Common myeloid progenitor, CD34-positive (primary cell): ENCODE measurements at regions of chr2 and their contacts with region 1.

Region 1: GRCh38 chr2:240566203-240567136 is 1.8 kb upstream of the RNPEPL1 start:
- DNase-seq: peak; percentile 84 to 90 (median 89)
- H3K4me3 ChIP-seq: peak overlapping the region; percentile 13 to 86 (median 71)
- H3K27ac ChIP-seq: peak overlapping the region; percentile 76 to 92
- H3K4me1 ChIP-seq: peaks cover 13 to 73% (median 67%) of the 10 kb centered on the region in 4 experiments
- H3K27me3 ChIP-seq: no peaks in the 10 kb centered on the region

Region 2: DNA sequence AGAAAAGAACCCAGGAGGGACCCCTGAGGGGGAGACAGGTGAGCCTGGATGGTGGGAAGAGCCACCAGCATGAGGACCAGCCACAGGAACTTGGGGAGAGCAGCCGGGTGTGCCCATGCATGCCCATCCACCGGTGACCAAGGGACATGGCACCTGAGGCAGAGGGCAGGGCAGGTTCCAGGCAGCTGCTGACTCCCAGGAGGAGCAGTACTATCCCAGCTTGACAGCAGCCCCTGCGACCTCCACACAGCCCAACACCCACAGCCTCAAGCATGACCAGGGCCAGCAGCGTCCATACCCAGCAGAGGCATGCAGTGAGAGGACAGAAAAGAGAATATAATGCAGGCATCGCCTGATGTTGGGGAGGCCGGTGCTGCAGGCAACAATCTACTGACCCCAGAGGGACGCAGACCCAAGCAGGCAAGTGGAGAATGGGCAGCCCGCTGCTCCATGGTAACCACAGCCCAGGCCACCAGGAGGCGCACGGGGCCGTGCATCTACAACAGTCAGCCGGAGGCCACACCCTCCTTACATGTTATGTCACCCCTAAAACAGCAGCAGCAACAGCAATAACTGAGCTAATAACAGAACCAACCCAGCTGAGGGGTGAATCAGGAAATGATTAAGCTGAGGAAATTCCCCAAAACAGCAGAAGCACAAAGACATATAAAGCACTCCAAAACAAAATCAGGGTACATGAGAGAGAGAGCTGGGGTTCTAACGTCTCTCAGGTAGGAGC is 52.8 kb before region 1 on chr2:
- CTCF ChIA-PET with region 1: interaction called, 11 read pairs
- POLR2A ChIA-PET with region 1: interaction called, 4 read pairs
- DNase-seq: peak; percentile 77 to 91 (median 90)
- H3K4me3 ChIP-seq: no peak overlapping the region
- H3K27ac ChIP-seq: no peak overlapping the region
- H3K4me1 ChIP-seq: peaks cover 0 to 4% (median 4%) of the 10 kb centered on the region in 4 experiments
- H3K27me3 ChIP-seq: peaks cover 0 to under 1% (median 0%) of the 10 kb centered on the region in 5 experiments

Region 3: GRCh38 chr2:240579771-240580614 is 13.5 kb after region 1 on chr2:
- CTCF ChIA-PET with region 1: interaction called, 13 read pairs
- POLR2A ChIA-PET with region 1: interaction called, 39 read pairs
- DNase-seq: peak in 1 of 3 donors; percentile 23
- H3K4me3 ChIP-seq: no peak overlapping the region
- H3K27ac ChIP-seq: no peak overlapping the region
- H3K4me1 ChIP-seq: peaks cover 0 to 13% (median 9%) of the 10 kb centered on the region in 4 experiments
- H3K27me3 ChIP-seq: no peaks in the 10 kb centered on the region

Region 4: DNA sequence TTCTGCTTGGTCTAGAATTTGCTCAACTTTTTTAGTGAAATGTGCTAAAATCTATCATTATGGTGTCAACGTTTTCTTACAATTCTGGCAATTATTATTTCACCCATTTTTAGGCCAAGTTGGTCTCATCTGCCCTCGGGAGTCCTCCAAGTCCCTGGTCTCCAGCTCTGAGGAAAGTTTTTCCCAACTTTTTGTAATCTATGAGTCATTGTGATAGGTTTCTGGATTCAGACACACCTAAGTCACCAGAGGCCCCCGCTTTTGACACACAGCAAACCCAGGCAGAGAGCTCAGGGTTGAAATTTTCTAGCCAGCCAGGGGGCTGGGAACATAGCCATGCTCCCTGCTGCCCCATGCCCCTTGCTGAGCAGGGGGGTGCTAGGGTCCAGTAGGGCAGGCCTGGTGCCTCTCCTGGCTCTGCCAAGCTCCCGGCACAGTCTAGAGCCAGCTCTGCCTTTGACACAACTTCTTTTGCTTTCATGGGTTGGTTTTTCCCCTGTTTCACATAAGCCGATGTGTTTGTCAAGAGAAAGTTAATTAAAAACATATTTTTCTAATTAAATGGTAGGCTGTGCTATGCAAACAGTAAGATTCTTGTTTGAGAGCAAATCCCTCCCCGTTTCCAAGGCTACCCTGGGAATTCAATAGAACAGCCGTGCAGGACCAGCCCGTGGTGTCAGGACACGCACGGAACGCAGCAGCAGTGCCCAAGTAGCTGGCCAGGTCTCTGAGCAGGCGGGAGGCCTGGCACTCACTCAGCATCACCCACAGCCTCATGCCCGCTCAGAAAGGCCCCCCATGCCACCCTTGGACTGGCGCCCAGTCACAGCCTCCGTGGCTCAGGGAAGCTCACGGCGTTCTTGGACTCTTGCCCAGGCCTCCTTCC is 406.4 kb after region 1 on chr2:
- CTCF ChIA-PET with region 1: no interaction called
- POLR2A ChIA-PET with region 1: no interaction called
- DNase-seq: no peak
- H3K4me3 ChIP-seq: no peak overlapping the region
- H3K27ac ChIP-seq: no peak overlapping the region
- H3K4me1 ChIP-seq: peaks cover 0 to 11% (median 1%) of the 10 kb centered on the region in 4 experiments
- H3K27me3 ChIP-seq: peaks cover 0 to 4% (median 0%) of the 10 kb centered on the region in 5 experiments